ENCODE measurements at regions of chrX and their contacts with region 1.

Region 1: GRCh38 chrX:135200297-135200696 is 29.1 kb upstream of the CT55 start:
- DNase-seq: no peak
- CTCF ChIP-seq: no peak

Region 2: GRCh38 chrX:135112096-135112729 is 88.1 kb before region 1 on chrX:
- CTCF ChIA-PET with region 1: interaction called, 11 read pairs
- POLR2A ChIA-PET with region 1: no interaction called
- DNase-seq: no peak
- CTCF ChIP-seq: peak; percentile 50

Measured in GM10248 (cell line).